ENCODE measurements at regions of chr1 and their contacts with region 1.

Region 1: DNA sequence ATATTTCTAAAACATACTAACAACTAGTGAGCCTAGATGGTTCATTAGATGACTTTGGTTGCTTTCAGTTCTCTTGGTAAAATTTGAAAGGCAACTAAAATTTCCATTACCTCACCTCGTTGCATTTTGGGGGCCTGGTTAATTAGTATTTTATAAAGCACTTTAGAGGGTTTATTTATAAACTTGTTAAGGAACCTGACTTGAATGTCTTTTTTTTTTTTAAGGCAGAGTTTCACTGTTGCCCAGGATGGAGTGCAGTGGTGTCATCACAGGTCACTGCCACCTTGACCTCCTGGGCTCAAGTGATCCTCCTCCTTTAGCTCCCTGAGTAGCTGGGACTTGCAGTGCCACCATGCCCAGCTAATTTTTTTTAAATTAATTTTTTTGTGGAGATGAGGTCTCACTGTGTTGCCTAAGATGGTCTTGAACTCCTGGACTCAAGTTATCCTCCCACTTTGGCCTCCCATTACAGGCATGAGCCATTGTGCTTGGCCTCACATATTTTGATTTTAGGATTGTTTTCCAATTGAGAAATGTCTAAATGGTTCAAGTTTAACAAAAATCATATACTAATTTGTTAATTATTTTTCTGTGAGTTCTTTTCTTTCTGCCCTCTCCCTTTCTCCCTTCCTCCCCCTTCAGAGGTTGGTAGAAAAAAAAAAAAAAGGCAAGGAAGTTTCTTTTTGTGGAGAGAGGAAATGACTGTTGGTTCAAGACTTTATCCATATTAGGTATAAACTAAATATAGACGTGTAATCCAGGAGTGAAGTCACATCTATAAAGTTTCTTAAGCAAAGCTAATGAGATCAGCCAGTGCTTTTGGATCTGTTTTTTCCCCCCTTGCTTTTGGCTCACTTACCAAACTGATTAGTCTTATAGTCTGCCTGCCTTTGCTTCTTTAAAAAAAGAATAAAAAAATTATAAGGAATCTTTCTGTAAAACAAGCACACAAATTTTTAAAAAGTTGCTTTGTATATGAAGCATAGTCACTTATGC is 24.7 kb downstream of the CLIC4 start:
- DNase-seq: peak; percentile 92
- H3K4me3 ChIP-seq: no peak overlapping the region
- H3K27ac ChIP-seq: peak overlapping the region; percentile 96
- H3K4me1 ChIP-seq: peaks cover 54% of the 10 kb centered on the region
- H3K27me3 ChIP-seq: no peaks in the 10 kb centered on the region
- CTCF ChIP-seq: no peak
- POLR2A ChIP-seq: peak; percentile 52

Region 2: DNA sequence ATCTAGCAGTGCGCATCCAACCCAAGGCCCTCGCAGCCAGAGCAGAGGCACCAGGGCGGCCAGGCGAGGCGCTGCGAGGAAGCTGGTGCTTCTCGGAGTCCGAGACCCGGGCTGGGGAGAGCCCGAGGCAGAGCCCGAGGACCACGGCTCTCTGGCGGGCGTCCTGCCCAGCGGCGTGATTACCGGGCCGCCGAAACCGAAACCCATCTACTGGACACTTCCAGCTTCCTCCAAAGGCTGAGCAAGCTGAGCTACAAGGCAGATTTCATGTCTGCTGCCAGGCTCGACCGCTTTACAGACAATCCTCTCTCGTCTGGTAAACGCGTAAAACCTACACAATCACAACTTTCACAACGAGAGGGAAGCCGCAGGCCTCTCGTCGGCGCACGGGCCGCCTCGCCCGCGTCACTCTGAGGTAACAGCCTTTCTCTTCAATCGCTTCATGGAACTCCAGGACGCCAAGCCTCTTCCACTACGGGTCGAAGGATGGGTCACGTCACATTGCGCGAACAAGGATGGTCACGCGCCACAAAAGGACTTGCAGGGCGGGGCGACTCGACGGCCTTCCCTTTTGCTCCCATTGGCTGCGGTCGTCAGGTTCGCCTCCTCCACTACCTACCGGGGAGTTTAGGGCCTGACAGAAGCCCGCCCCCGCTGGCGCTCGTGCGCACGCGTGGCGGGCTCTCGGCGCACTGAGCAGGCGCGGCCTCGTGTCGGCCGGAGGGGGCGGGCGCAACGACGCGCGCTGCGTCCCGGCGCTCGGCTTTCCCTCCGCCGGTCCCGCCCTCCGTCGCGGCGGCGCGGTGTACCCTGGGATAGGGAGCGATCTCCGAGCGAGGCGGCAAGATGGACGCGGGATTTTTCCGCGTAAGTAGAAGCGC is 127.2 kb before region 1 on chr1 and contains the start of gene SRRM1:
- CTCF ChIA-PET with region 1: no interaction called
- POLR2A ChIA-PET with region 1: no interaction called
- dilution Hi-C with region 1: no loop called
- intact Hi-C with region 1: loop called (anchors 5 kb)
- DNase-seq: peak; percentile 100
- H3K4me3 ChIP-seq: peak within 1 kb of the TSS; percentile 81 to 100 (median 81)
- H3K27ac ChIP-seq: peak within 1 kb of the TSS; percentile 84
- H3K4me1 ChIP-seq: peaks cover 18% of the 10 kb centered on the region
- H3K27me3 ChIP-seq: peaks cover 0 to under 1% of the 10 kb centered on the region in 2 experiments
- CTCF ChIP-seq: no peak
- POLR2A ChIP-seq: peak; percentile 98
- total RNA-seq, gene SRRM1: 157 and 163 TPM in 2 replicates

Region 3: DNA sequence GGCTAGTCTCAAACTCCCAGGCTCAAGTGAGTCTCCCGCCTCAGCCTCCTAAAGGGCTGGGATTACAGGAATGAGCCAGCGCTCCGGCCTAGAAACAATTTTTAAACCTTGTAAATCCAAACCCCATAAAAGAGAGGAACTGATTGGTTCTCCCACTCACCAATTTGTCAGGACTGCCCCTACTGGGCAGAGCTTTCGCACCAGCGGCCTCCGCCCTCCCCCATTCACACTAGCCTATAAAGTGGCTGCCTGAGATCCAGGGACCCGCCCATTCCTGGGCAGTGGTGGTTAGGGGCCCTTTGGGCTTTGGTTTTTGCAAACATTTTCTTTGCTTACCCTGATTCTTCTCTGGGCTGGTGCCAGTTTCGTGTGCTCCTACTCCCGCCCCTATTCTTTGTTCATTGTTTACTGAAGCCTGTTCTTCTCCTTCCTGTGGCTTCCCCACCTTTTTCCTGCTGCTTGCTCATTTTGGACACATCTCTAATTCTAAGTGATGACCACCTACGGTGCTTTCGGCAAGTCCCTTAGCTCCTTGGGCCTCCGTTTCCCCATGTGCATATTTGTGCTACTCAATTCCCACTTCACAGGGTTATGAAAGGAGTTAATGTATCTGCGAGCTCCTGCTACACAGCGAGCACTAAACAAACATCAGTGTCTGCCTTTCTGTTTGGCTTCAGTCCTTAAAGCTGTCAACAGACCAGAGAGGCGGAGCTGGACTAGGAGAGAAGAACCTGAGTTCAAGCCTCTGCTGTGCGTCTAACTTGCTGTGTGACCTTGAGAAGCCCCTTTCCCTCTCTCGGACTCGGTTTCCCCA is 64.5 kb before region 1 on chr1:
- CTCF ChIA-PET with region 1: no interaction called
- POLR2A ChIA-PET with region 1: no interaction called
- dilution Hi-C with region 1: no loop called
- intact Hi-C with region 1: loop called (anchors 1 kb)
- DNase-seq: peak; percentile 97
- H3K4me3 ChIP-seq: peak overlapping the region in 1 of 3 experiments; percentile 12
- H3K27ac ChIP-seq: peak overlapping the region; percentile 76
- H3K4me1 ChIP-seq: peaks cover 19% of the 10 kb centered on the region
- H3K27me3 ChIP-seq: no peaks in the 10 kb centered on the region
- CTCF ChIP-seq: no peak
- POLR2A ChIP-seq: peak; percentile 62

Region 4: GRCh38 chr1:24720152-24720551 is 49.8 kb before region 1 on chr1:
- CTCF ChIA-PET with region 1: interaction called, 3 read pairs
- POLR2A ChIA-PET with region 1: no interaction called
- dilution Hi-C with region 1: no loop called
- intact Hi-C with region 1: loop called (anchors 1 kb)
- DNase-seq: peak; percentile 96
- H3K4me3 ChIP-seq: no peak overlapping the region
- H3K27ac ChIP-seq: peak overlapping the region; percentile 85
- H3K4me1 ChIP-seq: peaks cover 27% of the 10 kb centered on the region
- H3K27me3 ChIP-seq: no peaks in the 10 kb centered on the region
- CTCF ChIP-seq: no peak
- POLR2A ChIP-seq: peak; percentile 65

Region 5: GRCh38 chr1:24754229-24754628 is 15.7 kb before region 1 on chr1:
- CTCF ChIA-PET with region 1: interaction called, 28 read pairs
- POLR2A ChIA-PET with region 1: interaction called, 9 read pairs
- dilution Hi-C with region 1: no loop called
- intact Hi-C with region 1: loop called (anchors 1 kb)
- DNase-seq: peak; percentile 85
- H3K4me3 ChIP-seq: no peak overlapping the region
- H3K27ac ChIP-seq: peak overlapping the region; percentile 49
- H3K4me1 ChIP-seq: peaks cover 35% of the 10 kb centered on the region
- H3K27me3 ChIP-seq: no peaks in the 10 kb centered on the region
- CTCF ChIP-seq: no peak
- POLR2A ChIP-seq: no peak

Region 6: DNA sequence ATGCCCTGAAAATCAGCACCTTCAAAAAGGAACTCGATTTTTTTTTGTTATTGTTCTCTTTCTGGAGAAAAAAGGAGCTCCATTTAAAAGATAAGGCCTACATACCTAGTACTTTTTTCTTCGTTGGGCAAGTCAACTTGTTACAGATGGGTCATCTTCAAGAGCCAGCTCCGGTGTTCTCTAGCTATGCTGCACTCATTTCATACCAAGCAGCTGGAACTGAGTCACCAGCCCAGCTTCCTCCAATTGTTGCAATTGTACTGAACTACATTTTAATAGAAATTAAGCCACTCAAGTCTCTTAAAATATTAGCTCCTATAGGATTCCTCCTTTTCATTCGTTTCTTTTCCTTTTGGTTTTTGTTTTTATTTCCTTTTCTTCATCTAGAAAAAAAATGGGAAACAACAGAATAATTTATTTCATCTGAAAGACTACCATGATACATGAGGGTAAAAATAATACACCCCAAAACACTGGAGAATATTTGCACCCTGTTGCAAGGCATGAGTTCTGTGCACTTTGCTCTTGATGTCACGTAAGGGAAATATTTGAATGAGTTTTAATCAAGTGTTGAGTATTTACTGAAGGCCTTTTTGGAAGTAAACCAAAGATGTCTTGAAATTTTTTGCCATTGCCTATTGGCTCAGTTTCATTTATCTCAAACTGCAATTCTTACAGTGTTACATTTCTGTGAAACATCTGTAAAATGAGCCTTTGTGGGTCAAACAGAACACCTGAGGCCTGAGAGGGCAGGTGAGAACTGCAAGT is 35.8 kb after region 1 on chr1:
- CTCF ChIA-PET with region 1: interaction called, 4 read pairs
- POLR2A ChIA-PET with region 1: no interaction called
- dilution Hi-C with region 1: no loop called
- intact Hi-C with region 1: loop called (anchors 1 kb)
- DNase-seq: peak; percentile 95
- H3K4me3 ChIP-seq: peak overlapping the region in 1 of 3 experiments; percentile 52
- H3K27ac ChIP-seq: peak overlapping the region; percentile 86
- H3K4me1 ChIP-seq: peaks cover 61% of the 10 kb centered on the region
- H3K27me3 ChIP-seq: no peaks in the 10 kb centered on the region
- CTCF ChIP-seq: no peak
- POLR2A ChIP-seq: peak; percentile 34

Region 7: GRCh38 chr1:24841593-24841992 is 71.6 kb after region 1 on chr1:
- CTCF ChIA-PET with region 1: no interaction called
- POLR2A ChIA-PET with region 1: no interaction called
- dilution Hi-C with region 1: no loop called
- intact Hi-C with region 1: no loop called
- DNase-seq: no peak
- H3K4me3 ChIP-seq: no peak overlapping the region
- H3K27ac ChIP-seq: no peak overlapping the region
- H3K4me1 ChIP-seq: no peaks in the 10 kb centered on the region
- H3K27me3 ChIP-seq: no peaks in the 10 kb centered on the region
- CTCF ChIP-seq: no peak
- POLR2A ChIP-seq: no peak

Measured in endothelial cell of umbilical vein (primary cell).